Activated CD4-positive, alpha-beta T cell treated with anti-CD3 and anti-CD28 coated beads for 36 hours (primary cell): ENCODE measurements at regions of chr12 and their contacts with region 1.

Region 1: GRCh38 chr12:20601668-20602280 is 93.4 kb upstream of the SLCO1C1 start:
- DNase-seq: no peak
- ATAC-seq: no peak
- H3K4me3 Mint-ChIP-seq: no peak overlapping the region
- H3K27ac Mint-ChIP-seq: no peak overlapping the region
- H3K4me1 Mint-ChIP-seq: no peaks in the 10 kb centered on the region
- H3K27me3 Mint-ChIP-seq: peaks cover 2% of the 10 kb centered on the region

Region 2: DNA sequence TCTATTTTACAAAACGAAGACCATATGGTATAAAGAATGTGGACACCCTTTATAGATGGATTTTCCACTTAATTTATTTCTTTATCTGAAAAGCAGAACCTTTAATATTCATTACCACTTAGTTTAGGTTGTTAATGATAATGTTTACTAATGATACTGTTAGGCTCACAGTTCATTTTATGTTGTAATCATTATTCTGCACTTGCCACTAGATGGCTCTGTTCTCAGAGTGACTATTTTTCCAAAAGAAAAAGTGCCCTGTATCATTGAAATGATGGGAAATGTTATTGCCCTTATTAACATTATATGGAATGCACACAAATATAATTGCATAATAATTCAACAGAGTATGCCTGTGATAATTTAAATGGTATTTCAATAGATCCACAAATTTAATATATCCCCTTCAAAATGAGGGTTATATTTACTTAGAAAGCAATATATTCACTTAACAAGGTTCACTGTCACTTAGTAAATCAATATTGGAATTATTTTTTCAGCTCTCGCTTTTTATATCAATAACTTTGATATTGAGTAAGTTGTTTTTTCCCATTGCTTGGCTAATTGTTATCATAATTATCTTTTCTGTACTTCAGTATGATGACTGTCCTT is 137.8 kb before region 1 on chr12:
- CTCF ChIA-PET with region 1: no interaction called
- POLR2A ChIA-PET with region 1: no interaction called
- intact Hi-C with region 1: loop called in 1 of 2 experiments (anchors 5 kb)
- DNase-seq: no peak
- ATAC-seq: no peak
- H3K4me3 Mint-ChIP-seq: no peak overlapping the region
- H3K27ac Mint-ChIP-seq: no peak overlapping the region
- H3K4me1 Mint-ChIP-seq: no peaks in the 10 kb centered on the region
- H3K27me3 Mint-ChIP-seq: no peaks in the 10 kb centered on the region